B cell (primary cell): ENCODE measurements at regions of chr11 and their contacts with region 1.

Region 1: GRCh38 chr11:33736148-33736809 is at the start of gene CD59:
- DNase-seq: peak; percentile 86
- ATAC-seq: peak; percentile 82
- H3K4me3 ChIP-seq: peak within 1 kb of the TSS; percentile 61 to 89 (median 85)
- H3K4me3 Mint-ChIP-seq: peak within 1 kb of the TSS; percentile 92
- H3K27ac ChIP-seq: peak within 1 kb of the TSS; percentile 57 to 70
- H3K27ac Mint-ChIP-seq: peak within 1 kb of the TSS; percentile 84
- H3K4me1 ChIP-seq: peaks cover 23 to 31% of the 10 kb centered on the region in 2 donors
- H3K4me1 Mint-ChIP-seq: peaks cover 37% of the 10 kb centered on the region
- H3K27me3 ChIP-seq: no peaks in the 10 kb centered on the region
- H3K27me3 Mint-ChIP-seq: no peaks in the 10 kb centered on the region
- CTCF ChIP-seq: no peak
- total RNA-seq, gene CD59: 41.3 and 44.5 TPM in 2 replicates

Region 2: GRCh38 chr11:33389635-33390034 is 346.6 kb before region 1 on chr11:
- CTCF ChIA-PET with region 1: no interaction called
- POLR2A ChIA-PET with region 1: no interaction called
- intact Hi-C with region 1: loop called (anchors 1 kb)
- DNase-seq: no peak
- ATAC-seq: peak; percentile 45
- H3K4me3 ChIP-seq: peak overlapping the region in 1 of 5 experiments; percentile 44
- H3K4me3 Mint-ChIP-seq: peak overlapping the region; percentile 57
- H3K27ac ChIP-seq: no peak overlapping the region
- H3K27ac Mint-ChIP-seq: peak overlapping the region; percentile 2
- H3K4me1 ChIP-seq: peaks cover 24 to 32% of the 10 kb centered on the region in 2 donors
- H3K4me1 Mint-ChIP-seq: peaks cover 33% of the 10 kb centered on the region
- H3K27me3 ChIP-seq: no peaks in the 10 kb centered on the region
- H3K27me3 Mint-ChIP-seq: no peaks in the 10 kb centered on the region
- CTCF ChIP-seq: no peak

Region 3: GRCh38 chr11:33700425-33701271 is 35.6 kb before region 1 on chr11 and contains the start of gene C11orf91:
- CTCF ChIA-PET with region 1: no interaction called
- POLR2A ChIA-PET with region 1: no interaction called
- intact Hi-C with region 1: loop called (anchors 1 kb)
- DNase-seq: peak; percentile 97
- ATAC-seq: peak; percentile 99
- H3K4me3 ChIP-seq: peak within 1 kb of the TSS; percentile 53 to 74 (median 60)
- H3K4me3 Mint-ChIP-seq: peak within 1 kb of the TSS; percentile 93
- H3K27ac ChIP-seq: no peak within 1 kb of the TSS
- H3K27ac Mint-ChIP-seq: peak within 1 kb of the TSS; percentile 57
- H3K4me1 ChIP-seq: peaks cover 6 to 16% of the 10 kb centered on the region in 2 donors
- H3K4me1 Mint-ChIP-seq: peaks cover 17% of the 10 kb centered on the region
- H3K27me3 ChIP-seq: peaks cover 0 to 14% (median 3%) of the 10 kb centered on the region in 4 experiments
- H3K27me3 Mint-ChIP-seq: peaks cover 5% of the 10 kb centered on the region
- CTCF ChIP-seq: no peak
- total RNA-seq, gene C11orf91: not detected in 2 replicates

Region 4: GRCh38 chr11:33716236-33716635 is 20.0 kb before region 1 on chr11:
- CTCF ChIA-PET with region 1: interaction called, 71 read pairs
- POLR2A ChIA-PET with region 1: no interaction called
- intact Hi-C with region 1: no loop called
- DNase-seq: no peak
- ATAC-seq: no peak
- H3K4me3 ChIP-seq: no peak overlapping the region
- H3K4me3 Mint-ChIP-seq: no peak overlapping the region
- H3K27ac ChIP-seq: no peak overlapping the region
- H3K27ac Mint-ChIP-seq: no peak overlapping the region
- H3K4me1 ChIP-seq: no peaks in the 10 kb centered on the region
- H3K4me1 Mint-ChIP-seq: no peaks in the 10 kb centered on the region
- H3K27me3 ChIP-seq: no peaks in the 10 kb centered on the region
- H3K27me3 Mint-ChIP-seq: no peaks in the 10 kb centered on the region
- CTCF ChIP-seq: no peak

Region 5: DNA sequence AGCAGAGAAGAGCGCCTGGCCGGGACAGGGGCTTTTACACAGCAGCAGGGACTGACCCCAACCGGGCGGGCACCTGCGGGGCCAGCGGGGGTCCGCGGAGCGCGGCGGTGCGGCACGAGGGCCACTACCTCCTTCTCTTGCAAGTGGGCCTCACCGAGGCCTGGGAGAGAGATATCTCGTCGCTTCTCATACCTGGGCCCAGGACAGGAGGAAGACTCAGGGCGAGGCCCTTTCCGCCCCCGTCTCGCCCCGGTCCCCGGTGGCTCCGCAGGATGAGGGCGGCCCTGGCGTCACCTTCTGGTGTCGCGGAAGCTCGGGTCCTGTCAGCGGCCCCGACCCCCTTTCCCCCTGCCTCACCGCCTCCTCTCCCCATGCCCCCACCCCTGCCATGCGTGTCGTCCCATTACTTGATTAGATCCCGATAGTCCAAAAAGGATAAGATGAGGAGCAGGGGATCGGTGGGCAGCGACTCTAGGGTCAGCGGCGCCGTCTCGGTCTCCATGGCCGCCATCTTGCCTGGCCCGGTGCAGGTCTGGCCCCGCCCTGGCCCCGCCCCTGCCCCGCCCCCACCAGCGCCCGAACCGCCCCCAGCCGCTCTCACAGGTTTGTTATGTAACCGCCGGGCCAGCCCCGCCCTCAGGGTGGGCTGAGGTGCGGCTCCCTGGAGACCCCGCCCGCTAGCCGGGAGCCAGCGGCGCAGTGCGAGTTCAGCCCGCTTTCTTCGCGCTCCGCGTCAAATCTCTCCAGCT is 37.9 kb after region 1 on chr11 and contains the start of gene FBXO3:
- CTCF ChIA-PET with region 1: no interaction called
- POLR2A ChIA-PET with region 1: no interaction called
- intact Hi-C with region 1: loop called (anchors 1 kb)
- DNase-seq: peak; percentile 90
- ATAC-seq: peak; percentile 94
- H3K4me3 ChIP-seq: peak within 1 kb of the TSS; percentile 66 to 91 (median 86)
- H3K4me3 Mint-ChIP-seq: peak within 1 kb of the TSS; percentile 92
- H3K27ac ChIP-seq: peak within 1 kb of the TSS; percentile 57 to 82
- H3K27ac Mint-ChIP-seq: peak within 1 kb of the TSS; percentile 95
- H3K4me1 ChIP-seq: peaks cover 21 to 24% of the 10 kb centered on the region in 2 donors
- H3K4me1 Mint-ChIP-seq: peaks cover 40% of the 10 kb centered on the region
- H3K27me3 ChIP-seq: peaks cover 0 to 22% (median 9%) of the 10 kb centered on the region in 4 experiments
- H3K27me3 Mint-ChIP-seq: peaks cover 19% of the 10 kb centered on the region
- CTCF ChIP-seq: no peak
- total RNA-seq, gene FBXO3: 32.7 and 34.3 TPM in 2 replicates

Region 6: DNA sequence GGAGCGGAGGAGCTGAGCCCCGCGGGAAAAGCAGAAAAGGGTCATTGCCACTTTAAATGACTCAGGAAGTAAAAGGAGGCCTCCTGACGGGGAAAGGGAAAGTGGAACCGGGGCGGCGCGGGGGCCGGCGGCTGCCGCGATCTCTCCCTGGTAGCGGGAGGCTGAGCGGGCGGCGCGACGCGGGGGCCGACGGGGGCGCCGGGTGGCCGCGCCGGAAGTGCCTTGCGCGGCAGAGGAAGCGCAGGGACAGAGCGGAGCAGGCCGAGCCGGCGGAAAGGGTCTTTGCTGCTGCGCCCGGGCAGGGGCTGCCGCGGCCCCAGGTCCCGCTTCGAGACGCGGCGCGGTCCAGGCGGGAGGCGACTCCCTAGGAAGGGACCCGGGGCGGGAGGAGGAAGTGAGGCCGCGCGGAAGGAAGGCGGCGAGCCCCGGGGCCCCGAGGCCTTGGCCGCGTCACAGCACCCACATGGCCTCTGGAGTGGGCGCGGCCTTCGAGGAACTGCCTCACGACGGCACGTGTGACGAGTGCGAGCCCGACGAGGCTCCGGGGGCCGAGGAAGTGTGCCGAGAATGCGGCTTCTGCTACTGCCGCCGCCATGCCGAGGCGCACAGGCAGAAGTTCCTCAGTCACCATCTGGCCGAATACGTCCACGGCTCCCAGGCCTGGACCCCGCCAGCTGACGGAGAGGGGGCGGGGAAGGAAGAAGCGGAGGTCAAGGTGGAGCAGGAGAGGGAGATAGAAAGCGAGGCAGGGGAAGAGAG is 1926.5 kb after region 1 on chr11 and contains the start of gene TRIM44:
- CTCF ChIA-PET with region 1: no interaction called
- POLR2A ChIA-PET with region 1: no interaction called
- intact Hi-C with region 1: loop called (anchors 10 kb)
- DNase-seq: peak; percentile 92
- ATAC-seq: peak; percentile 83
- H3K4me3 ChIP-seq: peak within 1 kb of the TSS; percentile 76 to 98 (median 89)
- H3K4me3 Mint-ChIP-seq: peak within 1 kb of the TSS; percentile 88
- H3K27ac ChIP-seq: peak within 1 kb of the TSS; percentile 86 to 96
- H3K27ac Mint-ChIP-seq: peak within 1 kb of the TSS; percentile 97
- H3K4me1 ChIP-seq: peaks cover 26 to 29% of the 10 kb centered on the region in 2 donors
- H3K4me1 Mint-ChIP-seq: peaks cover 40% of the 10 kb centered on the region
- H3K27me3 ChIP-seq: peaks cover 0 to 5% (median 0%) of the 10 kb centered on the region in 4 experiments
- H3K27me3 Mint-ChIP-seq: peaks cover 13% of the 10 kb centered on the region
- CTCF ChIP-seq: no peak
- total RNA-seq, gene TRIM44: 71.1 TPM in 2 replicates